ENCODE measurements at regions of chr19 and their contacts with region 1.

Region 1: DNA sequence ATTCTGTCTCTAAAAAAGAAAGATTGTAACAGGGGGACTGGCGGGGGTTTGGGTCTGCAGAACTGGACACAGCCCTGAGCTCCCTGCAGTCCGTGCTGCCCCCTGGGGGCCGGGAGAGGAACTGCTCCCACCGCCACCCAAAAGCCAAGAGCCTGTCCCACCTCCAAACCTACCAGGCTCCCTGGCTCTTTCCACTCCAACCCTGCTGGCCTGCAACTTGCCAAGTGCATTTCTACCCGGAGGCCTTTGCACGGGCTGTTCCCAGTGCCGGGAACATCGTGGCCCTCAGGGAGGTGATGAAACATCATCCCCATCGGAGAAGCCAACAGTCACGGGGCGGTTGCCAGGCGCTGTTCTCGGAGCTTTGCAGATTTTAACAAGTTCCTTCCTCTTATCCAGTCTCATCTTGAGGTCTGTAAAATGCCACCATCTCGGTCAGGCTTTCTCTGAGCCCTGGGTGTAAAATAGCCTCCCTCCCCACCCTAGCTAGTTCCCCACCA is 50.7 kb downstream of the SMIM24 start:
- DNase-seq: peak; percentile 86
- H3K4me3 ChIP-seq: peak overlapping the region in 1 of 2 experiments; percentile 36; a peak in 1 of 4 replicates
- H3K27ac ChIP-seq: peak overlapping the region in 1 of 2 experiments; percentile 84; a peak in 2 of 4 replicates
- H3K4me1 ChIP-seq: peaks cover 0 to 9% of the 10 kb centered on the region in 2 experiments; a peak in 1 of 4 replicates
- H3K27me3 ChIP-seq: no peaks in the 10 kb centered on the region
- CTCF ChIP-seq: peak; percentile 97
- EP300 ChIP-seq: no peak
- RAD21 ChIP-seq: peak; percentile 88

Region 2: GRCh38 chr19:3250675-3251074 is 179.0 kb before region 1 on chr19:
- CTCF ChIA-PET with region 1: no interaction called
- POLR2A ChIA-PET with region 1: no interaction called
- DNase-seq: peak; percentile 62
- H3K4me3 ChIP-seq: no peak overlapping the region
- H3K27ac ChIP-seq: no peak overlapping the region
- H3K4me1 ChIP-seq: no peaks in the 10 kb centered on the region
- H3K27me3 ChIP-seq: peaks cover 4% of the 10 kb centered on the region; the same call in 1 of the 2 replicates
- CTCF ChIP-seq: peak; percentile 52
- EP300 ChIP-seq: no peak
- RAD21 ChIP-seq: peak; percentile 25; the same call in 1 of the 2 replicates

Region 3: GRCh38 chr19:3324321-3324856 is 105.2 kb before region 1 on chr19:
- CTCF ChIA-PET with region 1: interaction called, 47 read pairs
- POLR2A ChIA-PET with region 1: no interaction called
- DNase-seq: peak; percentile 74
- H3K4me3 ChIP-seq: no peak overlapping the region
- H3K27ac ChIP-seq: no peak overlapping the region
- H3K4me1 ChIP-seq: no peaks in the 10 kb centered on the region
- H3K27me3 ChIP-seq: peaks cover 15% of the 10 kb centered on the region; the same call in 1 of the 2 replicates
- CTCF ChIP-seq: peak; percentile 80
- EP300 ChIP-seq: no peak
- RAD21 ChIP-seq: peak; percentile 33

Region 4: DNA sequence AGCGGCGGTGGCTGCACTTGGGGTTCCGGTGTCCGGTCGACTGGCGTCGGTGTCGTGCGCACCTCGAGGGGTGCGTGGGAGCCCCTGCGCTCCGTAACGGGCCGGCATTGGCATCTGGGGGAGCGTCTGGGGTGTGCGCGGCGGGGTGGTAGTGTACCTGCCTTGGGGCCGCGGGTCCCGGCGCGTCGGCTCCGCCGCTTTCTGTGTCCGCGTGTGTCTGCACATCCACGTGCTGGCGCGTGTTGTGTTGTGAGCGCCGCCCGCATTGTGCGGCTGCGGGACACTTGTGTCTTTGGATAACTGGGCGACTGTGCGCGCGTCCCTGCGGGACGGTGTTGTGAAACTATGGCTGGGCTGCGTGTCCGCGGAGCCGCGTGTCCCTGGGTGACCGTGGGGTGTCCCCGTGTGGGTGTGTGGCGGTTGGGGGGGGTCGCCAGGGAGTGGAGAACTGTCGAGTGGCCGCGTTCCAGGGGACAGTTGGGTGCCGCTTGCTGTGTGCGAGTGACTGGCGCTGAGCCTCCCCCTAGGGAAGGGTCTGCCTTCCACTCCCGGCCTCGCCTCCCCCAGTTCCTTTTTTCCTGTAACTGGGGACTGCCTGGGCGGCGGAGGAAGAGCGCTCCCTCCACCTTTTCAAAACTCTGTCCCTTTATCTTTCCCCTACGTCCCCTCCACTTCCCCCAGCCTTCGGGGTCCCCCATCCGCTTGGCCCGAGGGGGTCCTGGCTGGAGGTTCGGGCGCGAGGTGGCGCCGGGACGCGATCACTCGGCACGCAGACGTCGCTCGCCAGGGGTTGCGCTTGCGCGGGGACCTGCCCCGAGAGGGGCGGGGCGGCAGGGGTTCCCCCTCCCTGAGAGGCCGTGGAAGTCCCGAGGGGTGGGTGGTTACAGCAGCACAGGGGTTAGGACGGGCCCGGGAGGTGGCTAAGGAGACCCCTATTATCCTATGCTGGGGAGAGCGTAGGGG is 68.9 kb before region 1 on chr19:
- CTCF ChIA-PET with region 1: interaction called, 15 read pairs
- POLR2A ChIA-PET with region 1: interaction called, 4 read pairs
- DNase-seq: peak; percentile 83
- H3K4me3 ChIP-seq: peak overlapping the region; percentile 71 to 76
- H3K27ac ChIP-seq: peak overlapping the region; percentile 20 to 90; a peak in 3 of 4 replicates
- H3K4me1 ChIP-seq: peaks cover 5 to 33% of the 10 kb centered on the region in 2 experiments; a peak in 2 of 4 replicates
- H3K27me3 ChIP-seq: no peaks in the 10 kb centered on the region
- CTCF ChIP-seq: peak; percentile 22; the same call in 1 of the 2 replicates
- EP300 ChIP-seq: no peak
- RAD21 ChIP-seq: peak; percentile 36; the same call in 1 of the 2 replicates

Region 5: DNA sequence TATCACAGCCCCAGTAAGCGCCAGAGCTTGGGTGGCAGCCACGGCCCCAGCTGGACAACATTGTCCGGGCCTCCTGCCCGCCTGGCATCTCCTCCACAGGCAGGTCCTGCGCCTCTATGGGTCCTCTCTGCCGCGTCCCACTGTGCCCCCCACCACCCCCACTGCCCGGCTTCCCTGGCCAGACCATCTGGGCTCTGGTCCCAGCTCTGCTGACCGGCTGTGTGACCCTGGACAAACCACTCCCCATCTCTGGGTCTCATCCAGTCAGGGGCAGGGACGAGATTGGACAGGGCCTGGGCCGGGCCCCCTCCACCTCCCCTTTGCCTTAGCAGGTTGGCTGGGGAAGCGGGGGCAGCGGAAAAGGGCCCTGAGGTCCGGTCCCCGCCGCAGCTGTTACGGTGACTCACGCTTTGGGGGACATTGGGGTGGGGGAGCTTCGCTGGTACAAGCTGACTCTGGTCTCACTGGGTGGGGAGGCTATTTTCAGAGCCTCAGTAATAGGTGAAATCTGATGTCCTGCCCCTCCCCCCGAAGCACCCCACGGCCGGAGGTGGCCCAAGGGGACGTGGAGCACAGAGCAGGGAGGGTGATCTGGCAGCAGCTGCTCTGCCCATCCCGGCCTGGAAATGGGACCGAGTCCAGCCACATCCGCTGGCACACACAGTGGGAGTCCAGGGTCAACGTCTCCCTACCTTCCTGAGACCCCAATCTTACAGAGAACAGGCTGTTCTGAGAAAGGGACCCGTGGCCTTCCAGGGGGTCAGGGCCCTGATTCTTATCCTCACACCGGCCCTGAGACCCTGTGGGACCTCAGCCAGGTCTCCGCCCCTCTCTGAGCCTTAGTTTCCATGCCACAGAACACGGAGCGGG is 54.2 kb before region 1 on chr19:
- CTCF ChIA-PET with region 1: interaction called, 32 read pairs
- POLR2A ChIA-PET with region 1: interaction called, 15 read pairs
- DNase-seq: peak; percentile 90
- H3K4me3 ChIP-seq: peak overlapping the region in 1 of 2 experiments; percentile 7; a peak in 1 of 4 replicates
- H3K27ac ChIP-seq: peak overlapping the region; percentile 44 to 94; a peak in 3 of 4 replicates
- H3K4me1 ChIP-seq: peaks cover 3 to 30% of the 10 kb centered on the region in 2 experiments; a peak in 3 of 4 replicates
- H3K27me3 ChIP-seq: no peaks in the 10 kb centered on the region
- CTCF ChIP-seq: no peak
- EP300 ChIP-seq: peak in 1 of 2 experiments; percentile 32; a peak in 2 of 4 replicates
- RAD21 ChIP-seq: no peak; the same call in 1 of the 2 replicates

Region 6: GRCh38 chr19:3413796-3414327 is 15.8 kb before region 1 on chr19:
- CTCF ChIA-PET with region 1: interaction called, 17 read pairs
- POLR2A ChIA-PET with region 1: interaction called, 5 read pairs
- DNase-seq: peak; percentile 58
- H3K4me3 ChIP-seq: no peak overlapping the region
- H3K27ac ChIP-seq: peak overlapping the region in 1 of 2 experiments; percentile 67; a peak in 2 of 4 replicates
- H3K4me1 ChIP-seq: peaks cover 0 to 20% of the 10 kb centered on the region in 2 experiments; a peak in 1 of 4 replicates
- H3K27me3 ChIP-seq: no peaks in the 10 kb centered on the region
- CTCF ChIP-seq: no peak
- EP300 ChIP-seq: no peak
- RAD21 ChIP-seq: no peak

Region 7: GRCh38 chr19:3471954-3472655 is 42.5 kb after region 1 on chr19:
- CTCF ChIA-PET with region 1: interaction called, 18 read pairs
- POLR2A ChIA-PET with region 1: interaction called, 4 read pairs
- DNase-seq: peak; percentile 87
- H3K4me3 ChIP-seq: peak overlapping the region in 1 of 2 experiments; percentile 32; a peak in 1 of 4 replicates
- H3K27ac ChIP-seq: no peak overlapping the region
- H3K4me1 ChIP-seq: peaks cover 0 to 2% of the 10 kb centered on the region in 2 experiments; a peak in 1 of 4 replicates
- H3K27me3 ChIP-seq: no peaks in the 10 kb centered on the region; the same call in 1 of the 2 replicates
- CTCF ChIP-seq: peak; percentile 90
- EP300 ChIP-seq: no peak
- RAD21 ChIP-seq: peak; percentile 71